Activated CD4-positive, alpha-beta T cell treated with anti-CD3 and anti-CD28 coated beads, Interleukin-2, amount 10 ng/mL, durations not matched to agents 24 days and 14 days (primary cell): ENCODE measurements at regions of chr7 and their contacts with region 1.

Region 1: GRCh38 chr7:134316539-134317344 is at the start of gene SLC35B4:
- DNase-seq: peak; percentile 98
- H3K4me3 Mint-ChIP-seq: peak within 1 kb of the TSS; percentile 93
- H3K27ac Mint-ChIP-seq: peak within 1 kb of the TSS; percentile 92
- H3K4me1 Mint-ChIP-seq: peaks cover 21% of the 10 kb centered on the region
- H3K27me3 Mint-ChIP-seq: peaks cover 5% of the 10 kb centered on the region
- total RNA-seq, gene SLC35B4: 23.0 and 27.6 TPM in 2 replicates

Region 2: DNA sequence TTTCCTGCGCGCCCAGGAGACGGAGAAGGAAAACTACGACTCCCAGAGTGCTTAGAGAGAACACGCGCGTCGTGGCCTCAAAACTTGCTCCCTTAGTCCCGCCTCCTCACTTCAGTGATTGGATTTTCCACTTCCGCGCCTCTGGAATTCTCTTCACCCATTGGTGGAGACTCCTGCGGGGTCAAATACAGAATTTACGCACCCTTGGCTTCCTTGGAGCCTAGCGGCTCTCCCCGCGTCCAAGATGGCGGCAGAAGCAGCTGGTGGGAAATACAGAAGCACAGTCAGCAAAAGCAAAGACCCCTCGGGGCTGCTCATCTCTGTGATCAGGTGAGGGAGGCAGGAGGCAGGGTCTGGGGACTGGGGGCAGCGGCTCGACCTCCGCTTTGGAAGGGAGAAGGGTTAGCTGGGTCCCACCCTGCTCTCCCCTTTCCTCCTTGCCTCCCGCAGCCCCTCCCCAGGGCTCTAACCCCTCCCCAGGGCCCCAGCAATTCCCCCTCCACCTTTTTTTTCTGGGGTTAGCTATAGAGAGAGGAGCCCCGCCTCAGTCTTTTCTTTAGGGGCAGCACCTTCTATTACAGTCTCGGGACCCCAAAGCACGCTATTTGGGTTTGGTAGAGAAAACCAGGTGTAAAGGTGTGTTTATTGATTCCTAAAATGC is 1063.8 kb before region 1 on chr7 and contains the start of gene EXOC4:
- intact Hi-C with region 1: loop called (anchors 2 kb)
- DNase-seq: peak; percentile 98
- H3K4me3 Mint-ChIP-seq: peak within 1 kb of the TSS; percentile 95
- H3K27ac Mint-ChIP-seq: peak within 1 kb of the TSS; percentile 91
- H3K4me1 Mint-ChIP-seq: peaks cover 22% of the 10 kb centered on the region
- H3K27me3 Mint-ChIP-seq: no peaks in the 10 kb centered on the region
- total RNA-seq, gene EXOC4: 50.0 and 53.0 TPM in 2 replicates

Region 3: DNA sequence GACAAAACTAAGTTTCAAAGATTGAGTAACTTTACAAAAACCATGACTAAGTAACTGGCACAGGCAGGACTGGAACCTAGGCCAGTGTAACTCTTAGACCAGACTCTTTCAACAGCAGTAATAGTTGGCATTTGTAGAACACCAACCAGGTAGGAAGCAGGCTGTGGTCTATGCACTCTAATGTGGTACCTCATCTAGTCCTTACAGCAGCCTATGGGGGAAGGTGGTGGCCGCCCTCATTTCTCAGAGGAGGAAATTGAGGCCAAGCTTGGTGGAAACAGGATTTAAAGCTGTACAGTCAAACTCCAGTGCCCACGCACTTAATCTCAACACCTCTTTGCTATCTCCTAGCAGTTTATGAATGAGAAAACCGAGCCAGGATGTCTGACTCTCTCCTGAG is 355.0 kb before region 1 on chr7:
- intact Hi-C with region 1: no loop called
- DNase-seq: peak; percentile 55
- H3K4me3 Mint-ChIP-seq: no peak overlapping the region
- H3K27ac Mint-ChIP-seq: no peak overlapping the region
- H3K4me1 Mint-ChIP-seq: peaks cover 3% of the 10 kb centered on the region
- H3K27me3 Mint-ChIP-seq: no peaks in the 10 kb centered on the region

Region 4: GRCh38 chr7:134134004-134134403 is 182.7 kb before region 1 on chr7:
- intact Hi-C with region 1: no loop called
- DNase-seq: no peak
- H3K4me3 Mint-ChIP-seq: no peak overlapping the region
- H3K27ac Mint-ChIP-seq: no peak overlapping the region
- H3K4me1 Mint-ChIP-seq: no peaks in the 10 kb centered on the region
- H3K27me3 Mint-ChIP-seq: peaks cover 11% of the 10 kb centered on the region

Region 5: DNA sequence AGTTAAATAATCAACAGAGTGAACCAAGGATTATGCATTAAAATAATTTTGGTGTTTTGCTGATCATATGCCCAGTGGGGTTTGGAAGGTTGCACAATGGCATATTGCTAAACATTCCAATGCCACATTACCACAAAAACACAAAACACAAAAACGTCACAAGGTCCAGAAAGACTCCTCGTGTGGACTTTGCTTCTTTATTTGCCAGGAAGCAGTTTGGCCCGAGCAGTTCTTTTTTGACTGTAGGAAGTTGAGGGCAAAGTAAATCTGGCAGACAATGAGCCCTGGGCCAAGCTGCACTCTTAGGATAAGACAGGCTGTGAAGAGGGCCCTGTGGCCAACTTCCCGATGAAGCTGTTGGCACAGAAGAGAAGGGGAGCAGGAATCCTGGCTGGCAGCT is 39.2 kb after region 1 on chr7:
- intact Hi-C with region 1: loop called (anchors 5 kb)
- DNase-seq: no peak
- H3K4me3 Mint-ChIP-seq: no peak overlapping the region
- H3K27ac Mint-ChIP-seq: no peak overlapping the region
- H3K4me1 Mint-ChIP-seq: peaks cover 2% of the 10 kb centered on the region
- H3K27me3 Mint-ChIP-seq: peaks cover 3% of the 10 kb centered on the region

Region 6: GRCh38 chr7:134458806-134459698 is 142.3 kb after region 1 on chr7 and contains the start of gene AKR1B1:
- intact Hi-C with region 1: loop called (anchors 2 kb)
- DNase-seq: peak; percentile 97
- H3K4me3 Mint-ChIP-seq: peak within 1 kb of the TSS; percentile 90
- H3K27ac Mint-ChIP-seq: peak within 1 kb of the TSS; percentile 83
- H3K4me1 Mint-ChIP-seq: peaks cover 39% of the 10 kb centered on the region
- H3K27me3 Mint-ChIP-seq: no peaks in the 10 kb centered on the region
- total RNA-seq, gene AKR1B1: 107 TPM in 2 replicates

Region 7: DNA sequence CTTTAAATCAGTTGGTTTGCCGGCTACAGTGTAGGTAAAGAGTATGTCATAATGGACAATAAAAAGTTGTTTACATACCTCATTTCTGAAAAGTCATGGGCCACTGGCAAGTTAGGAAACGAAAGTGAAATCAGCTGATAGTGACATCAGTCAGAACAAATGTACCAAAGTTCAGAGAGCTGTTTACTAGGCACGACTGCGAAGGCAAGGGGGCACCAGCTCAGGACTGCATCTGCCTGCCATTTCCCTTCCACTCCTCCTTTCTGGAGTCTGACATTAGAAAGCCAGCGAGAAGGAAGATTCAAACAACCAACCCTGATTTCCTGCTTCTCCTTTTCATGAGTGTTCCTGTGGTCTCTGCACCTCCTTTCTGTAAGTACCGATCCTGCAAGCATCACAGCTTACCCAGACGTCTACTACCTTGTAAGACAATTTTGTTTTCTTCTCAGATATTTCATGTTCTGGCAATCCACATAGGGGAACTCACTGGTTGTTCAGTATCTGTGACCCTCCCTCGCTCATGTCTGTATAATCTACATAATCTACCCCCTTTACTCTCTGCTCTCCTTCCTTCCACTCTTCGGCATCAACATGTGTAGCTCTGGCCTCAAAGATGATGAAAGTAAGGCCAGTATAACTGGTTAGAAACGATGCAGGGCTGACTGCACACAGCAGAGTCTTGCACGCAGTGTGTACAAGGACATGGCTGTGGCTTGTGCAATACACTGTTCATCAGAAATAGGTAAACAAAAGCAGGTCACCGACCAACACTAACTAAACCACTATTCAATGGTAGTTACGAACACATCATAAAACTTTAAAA is 831.4 kb after region 1 on chr7 and contains the start of gene TMEM140:
- intact Hi-C with region 1: loop called (anchors 10 kb)
- DNase-seq: peak; percentile 92
- H3K4me3 Mint-ChIP-seq: peak within 1 kb of the TSS; percentile 91
- H3K27ac Mint-ChIP-seq: peak within 1 kb of the TSS; percentile 95
- H3K4me1 Mint-ChIP-seq: peaks cover 54% of the 10 kb centered on the region
- H3K27me3 Mint-ChIP-seq: no peaks in the 10 kb centered on the region
- total RNA-seq, gene TMEM140: 2.2 TPM in 2 replicates